Activated B cell treated with CpG ODN at 0.5 μM for 24 hours (primary cell): ENCODE measurements at regions of chr5 and their contacts with region 1.

Region 1: DNA sequence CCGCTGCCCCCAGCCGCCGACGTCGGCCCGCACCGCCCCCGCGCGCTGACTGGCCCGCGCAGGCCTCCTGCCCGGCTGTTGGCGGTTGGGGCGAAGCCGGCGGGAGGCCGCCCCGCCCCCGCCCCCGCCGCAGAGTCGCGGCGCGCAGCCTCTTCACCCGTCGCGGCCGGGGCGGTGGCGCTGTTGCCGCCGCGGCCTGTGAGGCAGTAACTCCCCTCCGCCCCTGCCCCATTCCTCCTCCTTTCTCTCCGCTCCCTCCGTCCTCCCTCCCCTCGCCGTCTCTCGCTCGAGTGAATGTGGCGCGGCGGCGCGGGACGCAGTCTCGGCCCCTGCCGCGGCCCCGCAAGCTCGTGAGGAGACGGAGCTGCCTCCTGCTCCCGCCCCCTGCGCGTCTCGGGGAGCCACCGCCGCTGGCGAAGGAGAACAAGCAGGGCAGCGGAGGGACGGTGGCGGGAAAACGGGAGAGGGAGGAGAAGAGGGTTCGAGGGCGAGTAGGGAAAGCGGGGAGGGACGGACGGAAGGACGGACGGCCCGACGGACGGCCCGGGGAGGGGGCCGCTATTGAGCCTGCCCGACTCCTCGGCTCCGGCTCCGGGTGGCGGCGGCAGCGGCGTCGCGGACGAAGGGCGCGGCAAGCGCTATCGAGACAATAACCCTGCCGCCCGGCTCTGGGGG is 637 bp upstream of the ERBIN start:
- DNase-seq: peak; percentile 82
- ATAC-seq: peak; percentile 73
- H3K4me3 Mint-ChIP-seq: peak overlapping the region; percentile 93
- H3K27ac Mint-ChIP-seq: peak overlapping the region; percentile 96
- H3K4me1 Mint-ChIP-seq: peaks cover 42% of the 10 kb centered on the region
- H3K27me3 Mint-ChIP-seq: no peaks in the 10 kb centered on the region
- CTCF ChIP-seq: no peak

Region 2: GRCh38 chr5:65562731-65563701 is 362.7 kb before region 1 on chr5 and contains the starts of genes CENPK and PPWD1:
- CTCF ChIA-PET with region 1: no interaction called
- POLR2A ChIA-PET with region 1: interaction called, 6 read pairs
- intact Hi-C with region 1: loop called (anchors 1 kb)
- DNase-seq: peak; percentile 81
- ATAC-seq: peak; percentile 99
- H3K4me3 Mint-ChIP-seq: peak within 1 kb of the TSS; percentile 96
- H3K27ac Mint-ChIP-seq: peak within 1 kb of the TSS; percentile 97
- H3K4me1 Mint-ChIP-seq: peaks cover 41% of the 10 kb centered on the region
- H3K27me3 Mint-ChIP-seq: no peaks in the 10 kb centered on the region
- CTCF ChIP-seq: no peak
- total RNA-seq, gene CENPK: 10.7 and 15.1 TPM in 2 replicates
- total RNA-seq, gene PPWD1: 57.8 and 69.7 TPM in 2 replicates

Region 3: DNA sequence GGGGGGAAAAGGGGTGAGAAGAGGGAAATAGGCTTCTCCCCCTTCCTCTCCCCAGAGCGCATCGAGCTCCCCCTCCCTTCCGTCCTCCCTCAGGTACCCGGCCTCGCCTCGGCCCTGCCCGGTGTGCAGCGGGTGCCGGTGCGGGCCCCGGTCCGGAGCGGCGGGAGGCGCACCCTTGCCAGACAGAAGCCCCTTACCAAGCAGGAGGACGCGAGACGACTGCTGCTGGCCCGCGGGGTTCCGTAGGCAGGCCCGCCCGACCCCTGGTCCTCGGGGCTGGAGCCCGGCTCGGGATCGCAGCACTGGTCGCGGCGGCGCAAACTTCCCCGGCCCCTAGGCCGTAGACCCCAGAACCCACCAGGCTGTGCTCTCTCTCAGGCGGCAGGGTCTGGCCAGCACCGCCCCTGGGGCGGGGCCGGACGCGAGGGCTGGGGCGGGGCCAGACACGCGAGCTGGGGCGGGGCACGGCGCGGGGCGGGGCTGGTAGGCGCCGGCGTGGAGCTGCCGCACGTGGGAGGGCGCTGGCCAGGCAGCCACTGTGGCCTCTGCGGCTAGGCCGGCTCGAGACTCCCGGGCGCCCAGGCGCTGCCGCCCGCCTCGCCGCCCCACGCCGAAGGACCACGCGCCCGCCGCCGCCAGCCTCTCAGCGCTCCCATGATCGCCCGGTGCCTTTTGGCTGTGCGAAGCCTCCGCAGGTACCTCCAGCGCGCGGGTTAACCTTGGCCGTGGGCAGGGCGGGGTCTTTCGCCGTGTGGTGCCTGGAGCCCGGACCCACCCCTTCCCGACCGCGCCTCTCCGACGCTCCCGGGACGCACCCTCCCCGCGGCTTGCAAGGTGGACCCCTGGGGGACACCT is 203.8 kb before region 1 on chr5 and contains the starts of genes NLN and SGTB:
- CTCF ChIA-PET with region 1: no interaction called
- POLR2A ChIA-PET with region 1: interaction called, 29 read pairs
- intact Hi-C with region 1: loop called (anchors 1 kb)
- DNase-seq: peak; percentile 92
- ATAC-seq: peak; percentile 97
- H3K4me3 Mint-ChIP-seq: peak within 1 kb of the TSS; percentile 89
- H3K27ac Mint-ChIP-seq: peak within 1 kb of the TSS; percentile 88
- H3K4me1 Mint-ChIP-seq: peaks cover 24% of the 10 kb centered on the region
- H3K27me3 Mint-ChIP-seq: no peaks in the 10 kb centered on the region
- CTCF ChIP-seq: no peak
- total RNA-seq, gene NLN: 14.2 and 16.5 TPM in 2 replicates
- total RNA-seq, gene SGTB: 7.1 and 9.5 TPM in 2 replicates

Region 4: DNA sequence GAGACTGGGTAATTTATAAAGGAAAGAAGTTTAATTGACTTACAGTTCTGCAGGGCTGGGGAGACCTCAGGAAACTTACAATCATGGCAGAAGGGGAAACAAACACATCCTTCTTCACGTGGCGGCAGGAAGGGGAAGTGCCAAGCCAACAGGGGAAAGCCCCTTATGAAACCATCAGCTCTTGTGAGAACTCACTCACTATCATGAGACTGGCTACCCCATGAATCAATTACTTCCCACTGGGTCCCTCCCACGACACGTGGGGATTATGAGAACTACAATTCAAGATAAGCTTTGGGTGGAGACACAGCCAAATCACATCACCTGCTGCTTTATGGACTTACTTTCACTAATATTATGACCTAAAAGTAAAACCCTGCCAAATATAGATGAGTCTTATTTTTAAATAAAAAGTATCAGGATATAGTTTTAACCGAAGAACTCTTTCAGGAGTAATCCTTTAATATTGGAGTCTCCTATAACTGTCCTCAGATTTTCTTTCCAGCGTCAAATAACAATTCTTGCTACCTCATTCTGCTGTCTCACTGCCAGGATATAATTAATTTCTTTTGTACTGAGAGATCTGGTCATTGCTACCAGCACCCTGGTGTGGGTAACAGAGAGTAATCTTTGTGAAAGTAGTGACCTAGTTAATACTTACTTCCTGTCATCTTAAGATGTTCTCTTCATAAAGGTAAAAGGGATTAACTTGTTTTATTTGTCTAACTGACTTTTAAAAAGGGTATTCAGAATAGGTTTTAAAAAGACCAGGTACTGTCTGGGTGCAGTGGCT is 135.2 kb before region 1 on chr5:
- CTCF ChIA-PET with region 1: no interaction called
- POLR2A ChIA-PET with region 1: no interaction called
- intact Hi-C with region 1: loop called (anchors 1 kb)
- DNase-seq: no peak
- ATAC-seq: peak; percentile 81
- H3K4me3 Mint-ChIP-seq: peak overlapping the region; percentile 50
- H3K27ac Mint-ChIP-seq: peak overlapping the region; percentile 77
- H3K4me1 Mint-ChIP-seq: peaks cover 10% of the 10 kb centered on the region
- H3K27me3 Mint-ChIP-seq: no peaks in the 10 kb centered on the region
- CTCF ChIP-seq: no peak

Region 5: DNA sequence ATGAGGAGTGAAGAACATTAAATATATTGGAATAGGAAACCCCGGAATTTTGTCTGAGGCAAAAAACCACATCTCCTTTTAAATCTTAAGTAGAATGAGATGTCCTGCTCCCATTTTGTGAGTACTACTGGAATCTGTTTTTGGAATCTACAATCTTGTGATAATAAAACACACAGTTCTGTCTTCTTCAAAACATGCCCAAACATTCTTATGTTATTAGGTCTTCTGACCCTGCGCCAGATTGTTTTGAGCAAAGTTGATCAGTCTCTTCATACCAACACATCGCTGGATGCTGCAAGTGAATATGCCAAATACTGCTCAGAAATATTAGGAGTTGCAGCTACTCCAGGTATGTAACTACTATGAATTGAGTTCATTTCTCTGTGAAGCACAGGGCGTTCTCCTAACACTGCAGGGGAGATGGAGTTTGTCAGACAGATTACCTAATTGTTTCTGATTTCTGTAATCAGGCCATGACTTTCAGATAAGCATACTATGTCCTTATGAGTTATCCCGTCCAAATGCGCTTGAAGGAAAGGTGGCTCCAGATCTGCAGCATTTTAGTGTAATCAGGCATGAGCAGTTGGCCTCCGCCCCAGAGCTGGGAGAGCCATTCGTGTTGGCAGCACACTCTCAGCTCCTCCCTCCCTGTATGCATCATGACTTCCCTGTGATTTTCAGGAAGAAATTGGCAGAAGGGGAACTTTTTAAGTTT is 115.8 kb before region 1 on chr5:
- CTCF ChIA-PET with region 1: no interaction called
- POLR2A ChIA-PET with region 1: no interaction called
- intact Hi-C with region 1: no loop called
- DNase-seq: no peak
- ATAC-seq: no peak
- H3K4me3 Mint-ChIP-seq: no peak overlapping the region
- H3K27ac Mint-ChIP-seq: no peak overlapping the region
- H3K4me1 Mint-ChIP-seq: peaks cover 4% of the 10 kb centered on the region
- H3K27me3 Mint-ChIP-seq: no peaks in the 10 kb centered on the region
- CTCF ChIP-seq: no peak

Region 6: GRCh38 chr5:65880496-65881072 is 45.2 kb before region 1 on chr5:
- CTCF ChIA-PET with region 1: no interaction called
- POLR2A ChIA-PET with region 1: no interaction called
- intact Hi-C with region 1: no loop called
- DNase-seq: no peak
- ATAC-seq: no peak
- H3K4me3 Mint-ChIP-seq: no peak overlapping the region
- H3K27ac Mint-ChIP-seq: no peak overlapping the region
- H3K4me1 Mint-ChIP-seq: no peaks in the 10 kb centered on the region
- H3K27me3 Mint-ChIP-seq: peaks cover 2% of the 10 kb centered on the region
- CTCF ChIP-seq: no peak

Region 7: GRCh38 chr5:65938256-65938655 is 12.5 kb after region 1 on chr5:
- CTCF ChIA-PET with region 1: no interaction called
- POLR2A ChIA-PET with region 1: interaction called, 6 read pairs
- intact Hi-C with region 1: loop called (anchors 1 kb)
- DNase-seq: no peak
- ATAC-seq: peak; percentile 77
- H3K4me3 Mint-ChIP-seq: peak overlapping the region; percentile 36
- H3K27ac Mint-ChIP-seq: peak overlapping the region; percentile 61
- H3K4me1 Mint-ChIP-seq: peaks cover 62% of the 10 kb centered on the region
- H3K27me3 Mint-ChIP-seq: no peaks in the 10 kb centered on the region
- CTCF ChIP-seq: no peak

Region 8: DNA sequence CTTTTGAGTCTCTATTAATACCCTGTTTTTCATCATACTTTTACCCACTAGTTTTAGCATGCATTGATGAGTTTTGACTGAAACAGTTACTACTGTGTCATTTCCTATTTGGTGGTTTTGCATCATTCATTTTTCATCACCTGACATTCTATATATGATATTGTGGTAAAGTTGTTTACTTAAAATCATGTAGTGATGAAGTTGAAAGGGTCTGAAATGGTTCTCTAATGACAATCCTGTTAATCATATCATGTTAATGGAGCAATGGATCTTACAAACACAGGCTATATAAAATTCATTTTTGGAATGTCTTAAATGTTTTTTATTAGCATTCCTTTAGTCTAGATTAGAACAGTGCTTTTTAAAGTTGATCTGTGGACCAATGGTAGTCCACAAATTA is 84.7 kb after region 1 on chr5:
- CTCF ChIA-PET with region 1: no interaction called
- POLR2A ChIA-PET with region 1: interaction called, 3 read pairs
- intact Hi-C with region 1: loop called (anchors 1 kb)
- DNase-seq: no peak
- ATAC-seq: peak; percentile 67
- H3K4me3 Mint-ChIP-seq: peak overlapping the region; percentile 26
- H3K27ac Mint-ChIP-seq: peak overlapping the region; percentile 89
- H3K4me1 Mint-ChIP-seq: peaks cover 49% of the 10 kb centered on the region
- H3K27me3 Mint-ChIP-seq: no peaks in the 10 kb centered on the region
- CTCF ChIP-seq: no peak